Vagina (tissue), 2 donors: ENCODE measurements at regions of chr7 and their contacts with region 1.

Region 1: DNA sequence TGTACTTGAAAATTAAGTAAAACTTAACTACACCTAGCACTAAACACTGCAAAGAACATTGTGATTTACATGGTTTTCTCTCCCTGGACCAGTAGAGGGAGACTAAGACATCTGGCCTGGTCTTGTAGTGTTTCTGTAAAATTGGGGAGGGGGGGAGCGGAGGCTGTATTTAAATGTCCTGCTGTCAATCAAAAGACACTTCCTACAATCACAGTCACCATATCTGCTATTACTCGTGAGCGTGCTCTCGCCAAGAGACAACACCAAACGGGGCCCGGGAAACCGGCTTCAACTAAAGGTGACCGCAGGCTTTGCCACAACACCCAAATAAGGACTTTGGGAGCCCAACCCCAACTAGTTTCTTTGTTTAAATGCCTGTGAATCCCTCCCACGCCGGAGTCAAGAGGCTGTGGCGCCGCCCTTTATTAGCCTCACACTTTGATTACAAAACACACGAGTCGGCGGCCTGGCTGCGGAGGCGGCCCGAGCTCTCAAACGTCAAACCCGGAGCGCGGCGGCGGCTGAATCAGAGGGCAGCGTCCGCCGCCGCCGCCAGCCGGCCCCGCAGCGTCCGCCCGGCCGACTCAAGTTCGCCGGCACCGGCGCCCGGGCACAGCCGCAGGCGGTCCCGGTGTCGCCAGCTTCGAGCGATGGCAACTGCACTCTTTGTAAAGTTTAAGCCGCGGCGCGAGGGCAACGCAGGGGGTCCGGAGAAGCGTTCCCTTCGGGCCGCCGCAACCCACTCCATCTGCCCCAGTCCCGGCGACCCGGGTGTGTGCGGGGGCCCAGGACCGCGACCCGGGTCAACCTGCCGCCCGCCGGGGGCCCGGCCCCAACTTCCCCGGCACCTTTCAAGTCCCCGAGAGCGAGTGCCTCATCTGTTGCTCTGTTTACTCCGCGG is 1.3 kb downstream of the KDM7A start:
- DNase-seq: peak; percentile 97 to 98
- H3K4me3 ChIP-seq: peak overlapping the region; percentile 77 to 98
- H3K27ac ChIP-seq: peak overlapping the region; percentile 100
- H3K4me1 ChIP-seq: peaks cover 23% of the 10 kb centered on the region
- H3K27me3 ChIP-seq: no peaks in the 10 kb centered on the region
- CTCF ChIP-seq: peak; percentile 61 to 89 (median 78)
- POLR2A ChIP-seq: peak in 1 of 2 donors; percentile 93

Region 2: DNA sequence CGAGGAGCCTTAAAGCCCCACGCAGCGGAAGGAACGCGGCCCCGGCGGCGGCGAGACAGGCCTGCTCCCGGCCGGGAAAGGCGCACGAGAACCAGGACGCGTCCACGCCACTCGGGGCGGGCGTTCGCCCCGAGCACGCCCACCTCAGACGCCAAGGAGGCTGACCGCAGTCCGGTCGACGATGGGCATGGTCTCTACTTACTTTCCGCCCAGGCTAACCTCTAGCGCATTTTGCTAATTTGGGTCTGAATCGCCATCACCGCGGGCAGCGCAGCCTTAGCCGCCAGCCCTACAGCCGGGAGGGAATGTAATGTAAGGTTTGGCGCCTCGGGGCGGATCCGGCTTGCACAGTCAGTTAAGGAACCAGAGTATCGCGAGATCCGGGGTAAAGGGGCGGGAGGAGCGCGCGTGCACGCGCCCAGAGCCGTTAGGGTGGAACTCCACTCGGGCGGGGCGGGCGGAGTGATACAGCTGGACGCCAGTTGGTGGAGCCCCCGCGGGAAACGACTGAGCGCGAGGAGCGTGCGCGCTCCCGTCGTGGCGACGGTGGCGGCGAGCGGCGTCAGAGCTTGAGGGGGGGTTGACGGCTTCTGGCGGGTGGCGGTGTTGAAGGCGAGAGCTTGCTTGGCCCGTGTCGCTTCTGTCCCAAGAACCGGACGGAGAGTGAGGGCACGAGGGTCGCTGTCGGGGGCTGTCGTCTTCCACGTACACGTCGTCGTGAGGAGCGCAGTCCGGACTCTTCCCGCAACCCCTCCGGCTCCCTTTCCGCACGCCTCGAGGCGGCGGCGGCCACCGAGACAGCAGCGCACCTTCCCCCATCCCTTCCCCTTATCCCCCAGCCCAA is 815.9 kb before region 1 on chr7 and contains the start of gene LUC7L2:
- intact Hi-C with region 1: loop called (anchors 5 kb)
- DNase-seq: peak; percentile 97 to 99
- H3K4me3 ChIP-seq: peak within 1 kb of the TSS; percentile 93 to 100
- H3K27ac ChIP-seq: peak within 1 kb of the TSS; percentile 100
- H3K4me1 ChIP-seq: peaks cover 37% of the 10 kb centered on the region
- H3K27me3 ChIP-seq: no peaks in the 10 kb centered on the region
- CTCF ChIP-seq: no peak
- POLR2A ChIP-seq: peak in 1 of 2 donors; percentile 88
- total RNA-seq, gene LUC7L2: 51.8 TPM

Region 3: DNA sequence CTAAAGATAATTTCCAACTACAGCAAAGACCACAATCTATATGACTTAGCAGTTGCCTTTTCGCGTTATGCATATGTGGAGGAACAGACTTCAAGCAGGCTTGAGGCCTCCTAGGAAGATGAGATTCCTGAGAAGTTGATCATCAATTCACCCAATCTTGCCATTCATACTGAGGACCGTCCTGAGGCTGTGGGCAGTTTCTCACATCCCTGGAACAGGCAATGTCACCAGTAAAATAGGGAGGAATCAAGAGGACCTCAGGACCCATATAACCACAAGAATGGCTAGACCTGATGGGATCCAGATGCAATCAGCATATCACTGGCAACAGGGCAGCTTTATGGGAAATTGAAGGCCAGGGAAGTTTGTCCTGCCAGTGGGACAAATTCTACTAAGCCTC is 16.0 kb before region 1 on chr7:
- intact Hi-C with region 1: no loop called
- DNase-seq: no peak
- H3K4me3 ChIP-seq: no peak overlapping the region
- H3K27ac ChIP-seq: no peak overlapping the region
- H3K4me1 ChIP-seq: no peaks in the 10 kb centered on the region
- H3K27me3 ChIP-seq: no peaks in the 10 kb centered on the region
- CTCF ChIP-seq: no peak
- POLR2A ChIP-seq: no peak

Region 4: DNA sequence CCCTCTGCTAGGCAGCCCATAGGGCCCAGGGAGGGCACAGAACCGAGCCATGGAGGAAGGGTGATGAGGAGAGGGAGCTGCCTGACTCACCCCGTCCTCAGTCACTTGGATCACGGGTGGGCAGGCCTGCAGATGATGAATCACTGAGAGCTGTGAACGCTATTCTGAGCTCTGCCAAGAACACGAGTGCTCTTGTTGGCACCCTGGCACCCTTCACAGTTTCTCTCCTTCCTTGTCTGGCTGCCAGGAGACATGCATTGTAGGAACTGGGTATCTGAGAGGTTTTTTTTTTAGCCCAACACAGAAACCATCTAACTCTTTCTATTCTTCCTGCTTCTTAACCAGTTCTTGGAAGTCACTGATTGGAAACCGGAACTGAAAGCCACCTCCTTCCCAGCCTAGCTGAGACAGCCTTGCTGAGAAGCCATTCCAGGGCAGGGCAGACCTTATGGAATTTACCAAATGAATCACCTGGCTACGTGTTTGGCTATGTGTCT is 140.7 kb after region 1 on chr7:
- intact Hi-C with region 1: loop called (anchors 10 kb)
- DNase-seq: peak in 1 of 2 donors; percentile 90
- H3K4me3 ChIP-seq: peak overlapping the region; percentile 21 to 23
- H3K27ac ChIP-seq: peak overlapping the region; percentile 92
- H3K4me1 ChIP-seq: peaks cover 25% of the 10 kb centered on the region
- H3K27me3 ChIP-seq: no peaks in the 10 kb centered on the region
- CTCF ChIP-seq: no peak
- POLR2A ChIP-seq: no peak